Caco-2 (cell line): ENCODE measurements at regions of chr6 and their contacts with region 1.

Region 1: GRCh38 chr6:140360423-140361050 is 986.1 kb upstream of the CITED2 start:
- DNase-seq: no peak
- H3K4me3 ChIP-seq: no peak overlapping the region
- H3K4me3 Mint-ChIP-seq: no peak overlapping the region
- H3K27ac Mint-ChIP-seq: no peak overlapping the region
- H3K4me1 ChIP-seq: no peaks in the 10 kb centered on the region
- H3K4me1 Mint-ChIP-seq: no peaks in the 10 kb centered on the region
- H3K27me3 ChIP-seq: no peaks in the 10 kb centered on the region
- H3K27me3 Mint-ChIP-seq: no peaks in the 10 kb centered on the region
- CTCF ChIP-seq: no peak

Region 2: DNA sequence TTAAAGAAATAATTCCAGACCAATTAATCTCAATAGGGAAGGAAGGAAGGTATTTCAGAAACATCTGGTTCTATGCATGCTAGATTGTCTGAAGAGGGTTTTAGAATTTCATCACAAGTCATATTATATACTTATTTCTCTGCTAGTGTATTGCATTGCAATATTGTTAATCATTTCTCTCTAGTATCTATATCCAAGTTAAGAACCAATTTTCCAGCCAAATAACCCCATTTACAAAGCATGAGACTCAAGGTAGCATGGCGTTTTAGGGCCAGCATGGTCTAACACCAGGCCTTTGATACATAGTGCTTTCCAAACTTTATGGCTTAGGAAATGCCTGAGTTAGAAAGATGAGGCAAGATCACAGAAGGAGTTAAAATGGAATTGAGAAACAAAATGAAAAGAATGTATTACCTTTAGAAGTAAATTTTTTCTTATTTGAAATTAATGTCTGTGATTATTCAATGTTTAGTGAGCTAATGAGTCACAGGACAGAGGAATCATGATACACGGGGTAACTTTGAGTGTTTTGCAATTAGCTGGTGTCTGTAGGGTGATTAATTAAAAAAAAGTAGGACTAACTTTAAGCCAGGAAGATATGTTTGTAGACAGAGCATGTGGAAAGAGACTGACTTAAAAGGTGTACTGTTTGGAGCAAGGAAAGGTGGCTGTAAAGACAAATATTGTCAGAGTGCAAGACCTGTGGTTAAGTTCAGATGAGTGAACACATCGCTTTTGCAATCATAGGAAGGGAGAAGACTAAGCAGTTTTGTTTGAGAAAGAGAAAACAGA is 20.1 kb after region 1 on chr6:
- CTCF ChIA-PET with region 1: no interaction called
- POLR2A ChIA-PET with region 1: no interaction called
- intact Hi-C with region 1: loop called (anchors 1 kb)
- DNase-seq: no peak
- H3K4me3 ChIP-seq: no peak overlapping the region
- H3K4me3 Mint-ChIP-seq: no peak overlapping the region
- H3K27ac Mint-ChIP-seq: no peak overlapping the region
- H3K4me1 ChIP-seq: no peaks in the 10 kb centered on the region
- H3K4me1 Mint-ChIP-seq: no peaks in the 10 kb centered on the region
- H3K27me3 ChIP-seq: no peaks in the 10 kb centered on the region
- H3K27me3 Mint-ChIP-seq: no peaks in the 10 kb centered on the region
- CTCF ChIP-seq: no peak